MCF 10A (cell line): ENCODE measurements at regions of chr1 and their contacts with region 1.

Region 1: DNA sequence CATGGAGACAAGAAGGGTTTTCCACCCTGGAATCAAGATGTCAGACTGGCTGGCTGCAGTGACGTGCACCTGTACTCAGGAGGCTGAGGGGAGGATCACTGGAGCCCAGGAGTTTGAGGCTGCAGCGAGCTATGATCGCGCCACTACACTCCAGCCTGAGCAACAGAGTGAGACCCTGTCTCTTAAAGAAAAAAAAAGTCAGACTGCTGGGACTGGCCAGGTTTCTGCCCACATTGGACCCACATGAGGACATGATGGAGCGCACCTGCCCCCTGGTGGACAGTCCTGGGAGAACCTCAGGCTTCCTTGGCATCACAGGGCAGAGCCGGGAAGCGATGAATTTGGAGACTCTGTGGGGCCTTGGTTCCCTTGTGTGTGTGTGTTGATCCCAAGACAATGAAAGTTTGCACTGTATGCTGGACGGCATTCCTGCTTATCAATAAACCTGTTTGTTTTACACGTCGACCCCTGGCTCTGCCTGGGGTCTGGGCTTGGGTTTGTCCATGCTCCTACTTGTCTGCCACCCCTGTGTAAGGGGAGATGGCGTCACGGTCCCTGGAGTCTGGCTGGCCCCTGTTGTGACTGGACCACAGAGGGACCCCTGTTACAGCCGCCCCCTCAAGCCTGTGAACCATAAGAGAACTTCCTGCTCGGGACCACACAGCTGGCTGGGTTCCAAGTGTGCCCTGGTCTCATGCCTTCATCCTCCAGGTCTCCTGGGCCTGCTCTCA is 20.9 kb upstream of the VPS13D start:
- DNase-seq: peak; percentile 86
- H3K4me3 Mint-ChIP-seq: no peak overlapping the region
- H3K27ac Mint-ChIP-seq: no peak overlapping the region
- H3K4me1 Mint-ChIP-seq: no peaks in the 10 kb centered on the region
- H3K27me3 Mint-ChIP-seq: peaks cover 22% of the 10 kb centered on the region
- CTCF ChIP-seq: peak; percentile 91

Region 2: GRCh38 chr1:12132092-12132491 is 76.8 kb before region 1 on chr1:
- CTCF ChIA-PET with region 1: interaction called, 316 read pairs
- POLR2A ChIA-PET with region 1: interaction called, 3 read pairs
- intact Hi-C with region 1: no loop called
- DNase-seq: peak; percentile 97
- H3K4me3 Mint-ChIP-seq: peak overlapping the region; percentile 25
- H3K27ac Mint-ChIP-seq: peak overlapping the region; percentile 82
- H3K4me1 Mint-ChIP-seq: peaks cover 13% of the 10 kb centered on the region
- H3K27me3 Mint-ChIP-seq: no peaks in the 10 kb centered on the region
- CTCF ChIP-seq: no peak

Region 3: DNA sequence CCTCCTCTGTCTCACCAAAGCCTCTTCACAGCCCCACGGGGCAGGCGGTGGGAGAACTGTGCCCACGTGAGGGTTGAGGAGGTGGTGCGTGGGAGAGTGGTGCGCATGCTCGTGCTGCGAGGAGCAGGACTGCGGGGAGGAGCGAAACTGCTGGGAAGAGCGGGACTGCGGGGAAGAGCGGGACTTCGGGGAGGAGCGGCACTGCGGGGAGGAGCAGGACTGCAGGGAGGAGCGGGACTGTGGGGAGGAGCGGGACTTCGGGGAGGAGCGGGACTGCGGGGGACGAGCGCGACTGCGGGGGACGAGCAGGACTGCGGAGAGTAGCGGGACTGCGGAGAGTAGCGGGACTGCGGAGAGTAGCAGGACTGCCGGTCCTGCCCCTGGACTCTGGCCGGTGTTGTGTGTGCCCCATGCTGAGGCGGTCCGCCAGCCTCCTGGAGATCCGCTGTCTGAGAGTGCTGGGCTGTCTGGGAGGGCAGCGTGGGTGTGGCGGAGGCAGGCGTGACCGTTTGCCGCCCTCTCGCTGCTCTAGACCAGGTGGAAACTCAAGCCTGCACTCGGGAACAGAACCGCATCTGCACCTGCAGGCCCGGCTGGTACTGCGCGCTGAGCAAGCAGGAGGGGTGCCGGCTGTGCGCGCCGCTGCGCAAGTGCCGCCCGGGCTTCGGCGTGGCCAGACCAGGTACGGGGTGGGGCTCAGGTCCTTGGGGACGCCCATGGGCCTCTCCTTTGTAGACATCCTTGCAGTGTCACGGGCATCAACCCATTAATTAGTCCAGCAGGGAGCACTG is 17.5 kb before region 1 on chr1:
- CTCF ChIA-PET with region 1: interaction called, 15 read pairs
- POLR2A ChIA-PET with region 1: no interaction called
- intact Hi-C with region 1: no loop called
- DNase-seq: no peak
- H3K4me3 Mint-ChIP-seq: no peak overlapping the region
- H3K27ac Mint-ChIP-seq: peak overlapping the region; percentile 42
- H3K4me1 Mint-ChIP-seq: peaks cover 5% of the 10 kb centered on the region
- H3K27me3 Mint-ChIP-seq: peaks cover 39% of the 10 kb centered on the region
- CTCF ChIP-seq: no peak

Region 4: DNA sequence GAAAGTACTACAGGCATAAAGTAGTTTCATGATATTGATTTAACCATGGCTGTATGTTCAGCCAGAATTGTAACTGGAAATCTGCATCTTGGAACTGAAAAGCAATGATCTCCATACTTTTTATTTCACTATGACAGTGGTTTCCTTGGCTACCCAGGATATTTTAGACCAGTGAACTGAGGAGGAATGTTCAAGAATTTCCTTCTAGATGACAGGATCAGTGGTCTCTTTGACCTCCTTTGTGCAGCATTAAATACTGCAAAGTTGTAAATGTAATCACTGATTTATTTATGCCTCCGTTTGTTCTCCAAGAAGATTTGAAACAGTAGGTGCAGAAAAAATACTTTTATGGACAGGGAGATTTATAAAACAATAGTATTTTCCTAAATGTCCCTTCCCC is 60.4 kb after region 1 on chr1:
- CTCF ChIA-PET with region 1: no interaction called
- POLR2A ChIA-PET with region 1: no interaction called
- intact Hi-C with region 1: no loop called
- DNase-seq: no peak
- H3K4me3 Mint-ChIP-seq: no peak overlapping the region
- H3K27ac Mint-ChIP-seq: no peak overlapping the region
- H3K4me1 Mint-ChIP-seq: no peaks in the 10 kb centered on the region
- H3K27me3 Mint-ChIP-seq: no peaks in the 10 kb centered on the region
- CTCF ChIP-seq: no peak